Left cardiac atrium (tissue), 4 donors: ENCODE measurements at regions of chr1 and their contacts with region 1.

Region 1: GRCh38 chr1:153572569-153573015 is 6.9 kb upstream of the S100A2 start:
- DNase-seq: peak; percentile 87
- ATAC-seq: peak; percentile 81 to 90

Region 2: DNA sequence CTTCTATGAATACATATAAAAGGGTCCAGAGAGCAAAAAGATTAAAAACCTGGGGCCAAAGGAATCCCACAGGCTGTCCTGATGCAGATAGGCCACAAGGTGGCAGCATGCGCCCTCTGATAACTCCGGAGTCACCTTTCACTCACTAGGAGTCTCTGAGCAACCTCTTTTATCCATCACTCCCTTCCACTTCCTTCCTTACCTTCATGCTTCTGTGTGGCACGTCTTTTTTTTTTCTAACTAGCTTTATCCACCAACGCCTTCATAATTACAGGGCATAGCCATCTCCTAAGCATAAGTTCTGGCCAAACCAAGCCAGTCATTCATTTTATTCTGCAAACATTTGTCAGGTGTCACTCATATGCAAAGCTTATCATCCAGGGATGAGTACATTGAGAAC is 220.1 kb before region 1 on chr1:
- intact Hi-C with region 1: loop called in 1 of 2 experiments (anchors 5 kb)
- DNase-seq: peak; percentile 72
- ATAC-seq: peak; percentile 75 to 82

Region 3: GRCh38 chr1:153510984-153511410 is 61.6 kb before region 1 on chr1:
- intact Hi-C with region 1: loop called (anchors 1 to 2 kb)
- DNase-seq: peak; percentile 88
- ATAC-seq: peak; percentile 60 to 75

Region 4: GRCh38 chr1:153532769-153533599 is 39.6 kb before region 1 on chr1:
- intact Hi-C with region 1: loop called (anchors 2 to 5 kb)
- DNase-seq: peak; percentile 88
- ATAC-seq: peak; percentile 43 to 49

Region 5: GRCh38 chr1:153617675-153618074 is 45.1 kb after region 1 on chr1:
- intact Hi-C with region 1: loop called in 1 of 2 experiments (anchors 5 kb)
- DNase-seq: peak; percentile 88
- ATAC-seq: peak; percentile 51 to 59

Region 6: GRCh38 chr1:153663211-153663610 is 90.6 kb after region 1 on chr1:
- intact Hi-C with region 1: loop called in 1 of 2 experiments (anchors 10 kb)
- DNase-seq: no peak
- ATAC-seq: no peak